OCI-LY7 (cell line): ENCODE measurements at regions of chr18 and their contacts with region 1.

Region 1: DNA sequence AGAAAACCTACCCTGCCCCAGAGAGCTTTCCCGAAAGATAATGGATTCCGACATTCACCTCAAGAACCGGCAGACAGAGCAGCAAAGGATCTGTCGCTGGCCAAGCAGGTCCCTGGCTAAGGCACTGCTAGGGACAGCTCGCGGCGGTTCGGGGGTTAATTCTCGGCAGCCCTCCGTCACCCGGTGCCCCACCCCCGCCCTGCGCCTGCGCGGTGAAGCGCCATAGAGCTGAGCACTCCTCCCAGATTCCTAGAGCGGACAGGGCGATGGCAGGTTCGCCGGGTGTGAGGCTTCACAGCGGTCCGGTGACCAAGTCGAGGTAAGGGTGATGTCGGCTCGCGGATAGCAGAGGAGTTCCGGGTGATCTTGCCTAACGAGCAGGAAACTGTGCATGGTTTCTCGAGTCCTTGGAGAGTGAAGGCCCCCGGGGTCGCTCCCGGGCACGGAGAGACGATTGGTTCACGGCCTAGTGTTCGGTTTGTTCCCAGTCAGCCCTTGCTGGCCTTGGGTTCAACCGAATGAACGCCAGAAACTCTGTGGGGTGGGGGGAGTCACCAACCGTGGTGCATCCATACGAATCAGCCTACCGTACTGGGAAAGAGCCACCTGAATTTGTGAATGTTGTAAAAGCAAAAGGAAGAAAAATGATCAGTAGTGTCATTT is at the start of gene ZSCAN30:
- DNase-seq: peak; percentile 87
- H3K4me3 ChIP-seq: peak within 1 kb of the TSS; percentile 86
- H3K27ac ChIP-seq: peak within 1 kb of the TSS; percentile 46
- H3K4me1 ChIP-seq: peaks cover 7% of the 10 kb centered on the region
- CTCF ChIP-seq: no peak
- total RNA-seq, gene ZSCAN30: 4.3 and 7.5 TPM in 2 replicates

Region 2: GRCh38 chr18:35240664-35241447 is 49.3 kb before region 1 on chr18 and contains the start of gene ZNF397:
- CTCF ChIA-PET with region 1: no interaction called
- POLR2A ChIA-PET with region 1: interaction called, 4 read pairs
- intact Hi-C with region 1: loop called (anchors 5 kb)
- DNase-seq: peak; percentile 92
- H3K4me3 ChIP-seq: peak within 1 kb of the TSS; percentile 92
- H3K27ac ChIP-seq: peak within 1 kb of the TSS; percentile 59
- H3K4me1 ChIP-seq: peaks cover 5% of the 10 kb centered on the region
- CTCF ChIP-seq: no peak
- total RNA-seq, gene ZNF397: 8.0 and 11.8 TPM in 2 replicates

Region 3: GRCh38 chr18:35334821-35335220 is 44.6 kb after region 1 on chr18:
- CTCF ChIA-PET with region 1: no interaction called
- POLR2A ChIA-PET with region 1: no interaction called
- intact Hi-C with region 1: loop called (anchors 2 kb)
- DNase-seq: no peak
- H3K4me3 ChIP-seq: no peak overlapping the region
- H3K27ac ChIP-seq: no peak overlapping the region
- H3K4me1 ChIP-seq: no peaks in the 10 kb centered on the region
- CTCF ChIP-seq: no peak

Region 4: GRCh38 chr18:35343936-35344735 is 53.9 kb after region 1 on chr18 and contains the start of gene ZNF24:
- CTCF ChIA-PET with region 1: no interaction called
- POLR2A ChIA-PET with region 1: interaction called, 7 read pairs
- intact Hi-C with region 1: loop called (anchors 2 kb)
- DNase-seq: peak; percentile 88
- H3K4me3 ChIP-seq: peak within 1 kb of the TSS; percentile 92
- H3K27ac ChIP-seq: peak within 1 kb of the TSS; percentile 83
- H3K4me1 ChIP-seq: peaks cover 24% of the 10 kb centered on the region
- CTCF ChIP-seq: no peak
- total RNA-seq, gene ZNF24: 13.6 and 16.7 TPM in 2 replicates

Region 5: GRCh38 chr18:35811896-35812295 is 521.7 kb after region 1 on chr18:
- CTCF ChIA-PET with region 1: no interaction called
- POLR2A ChIA-PET with region 1: no interaction called
- intact Hi-C with region 1: no loop called
- DNase-seq: no peak
- H3K4me3 ChIP-seq: no peak overlapping the region
- H3K27ac ChIP-seq: no peak overlapping the region
- H3K4me1 ChIP-seq: peaks cover 14% of the 10 kb centered on the region
- CTCF ChIP-seq: no peak